Right lobe of liver (tissue), 6 donors: ENCODE measurements at regions of chr4 and their contacts with region 1.

Region 1: DNA sequence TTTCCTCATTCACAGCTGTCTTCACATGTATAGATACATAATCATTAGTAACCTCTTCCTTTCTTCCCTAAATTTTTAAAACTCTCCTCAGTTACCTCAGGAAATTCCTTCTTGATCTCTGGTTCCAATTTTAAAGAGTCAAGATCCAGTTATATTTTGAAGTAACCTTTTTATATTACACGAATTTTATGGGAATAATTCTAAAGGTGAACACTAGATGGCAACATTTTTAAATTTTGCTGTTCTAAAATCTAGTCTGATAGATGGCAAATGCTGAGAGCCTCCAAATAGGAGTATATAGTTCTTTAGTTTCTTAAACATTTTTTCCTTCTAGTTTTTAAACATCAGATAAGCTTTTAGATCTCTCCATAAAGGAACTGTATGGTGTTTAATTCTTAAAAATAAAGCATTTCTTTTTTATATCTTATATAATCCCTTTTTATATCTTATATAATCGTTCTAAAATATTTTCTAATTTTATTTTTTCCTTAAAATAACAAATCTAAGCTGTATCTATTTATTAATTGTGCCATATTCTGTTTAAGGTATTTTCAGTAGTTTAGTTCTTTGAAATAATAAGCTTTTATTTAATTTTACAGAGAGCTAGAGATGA is 37.9 kb upstream of the PAPSS1 start:
- DNase-seq: no peak
- ATAC-seq: peak; percentile 52 to 62 (median 57)
- H3K4me3 ChIP-seq: no peak overlapping the region
- H3K27ac ChIP-seq: no peak overlapping the region
- H3K4me1 ChIP-seq: peaks cover 0 to 11% (median 0%) of the 10 kb centered on the region in 4 donors
- H3K27me3 ChIP-seq: no peaks in the 10 kb centered on the region
- CTCF ChIP-seq: peak; percentile 55 to 66 (median 59)
- POLR2A ChIP-seq: no peak

Region 2: GRCh38 chr4:107541511-107541910 is 216.5 kb before region 1 on chr4:
- intact Hi-C with region 1: no loop called
- DNase-seq: no peak
- ATAC-seq: peak in 1 of 4 donors; percentile 62
- H3K4me3 ChIP-seq: no peak overlapping the region
- H3K27ac ChIP-seq: no peak overlapping the region
- H3K4me1 ChIP-seq: no peaks in the 10 kb centered on the region
- H3K27me3 ChIP-seq: no peaks in the 10 kb centered on the region
- CTCF ChIP-seq: no peak
- POLR2A ChIP-seq: no peak

Region 3: DNA sequence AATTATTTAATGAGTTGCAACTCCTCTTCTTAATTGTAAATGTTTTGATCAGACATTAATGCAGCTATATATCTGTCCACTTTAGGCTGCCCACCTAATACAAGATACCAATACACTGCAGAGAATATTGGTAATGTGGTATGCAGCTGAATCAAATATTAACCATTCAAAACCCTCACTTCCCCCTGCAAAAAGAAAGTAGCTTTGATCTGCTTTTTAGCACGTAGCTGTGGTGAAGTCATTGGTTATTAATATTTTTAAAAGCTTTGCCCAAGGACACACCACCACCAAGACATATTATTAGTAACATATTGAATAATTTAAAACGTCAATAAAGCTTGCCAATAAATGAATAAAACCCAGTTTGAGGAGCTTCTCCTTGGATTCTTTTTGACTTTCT is 144.7 kb after region 1 on chr4:
- intact Hi-C with region 1: loop called in 1 of 2 experiments (anchors 10 kb)
- DNase-seq: no peak
- ATAC-seq: no peak
- H3K4me3 ChIP-seq: no peak overlapping the region
- H3K27ac ChIP-seq: no peak overlapping the region
- H3K4me1 ChIP-seq: no peaks in the 10 kb centered on the region
- H3K27me3 ChIP-seq: no peaks in the 10 kb centered on the region
- CTCF ChIP-seq: no peak
- POLR2A ChIP-seq: no peak

Region 4: DNA sequence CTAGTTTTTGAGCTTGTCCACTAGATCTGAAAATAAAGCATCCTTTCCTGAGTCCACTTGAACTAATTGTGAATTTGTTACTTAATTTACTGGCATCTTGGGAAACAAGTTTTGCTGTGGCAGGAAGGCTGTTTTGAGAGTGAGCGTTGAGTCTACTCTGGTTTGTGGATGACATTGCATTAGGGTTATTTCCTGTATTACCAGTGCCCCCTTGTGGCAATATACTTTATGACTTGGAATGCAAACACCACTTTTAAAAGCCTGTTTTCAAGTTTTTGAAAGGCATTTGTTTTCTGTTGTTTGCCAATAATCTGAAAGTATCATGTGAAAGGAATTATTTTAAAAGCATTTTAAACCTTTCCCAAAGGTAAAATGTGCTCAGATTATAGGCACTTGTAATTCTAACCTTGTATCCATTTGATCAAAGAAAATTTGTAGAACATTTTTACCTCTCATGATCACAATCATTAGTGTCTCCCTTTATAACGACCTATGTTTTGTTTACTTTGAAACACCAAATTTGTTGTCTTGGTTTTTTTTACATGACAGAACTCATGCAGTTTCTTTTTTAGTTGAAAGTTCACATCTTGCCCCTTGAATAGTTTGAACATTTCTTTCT is 155.4 kb after region 1 on chr4:
- intact Hi-C with region 1: loop called (anchors 5 to 10 kb)
- DNase-seq: no peak
- ATAC-seq: peak; percentile 92 to 98 (median 94)
- H3K4me3 ChIP-seq: no peak overlapping the region
- H3K27ac ChIP-seq: no peak overlapping the region
- H3K4me1 ChIP-seq: peaks cover 0 to 34% (median 2%) of the 10 kb centered on the region in 4 donors
- H3K27me3 ChIP-seq: no peaks in the 10 kb centered on the region
- CTCF ChIP-seq: peak; percentile 69 to 92 (median 77)
- POLR2A ChIP-seq: no peak